Endothelial cell of umbilical vein (primary cell): ENCODE measurements at regions of chr14 and their contacts with region 1.

Region 1: DNA sequence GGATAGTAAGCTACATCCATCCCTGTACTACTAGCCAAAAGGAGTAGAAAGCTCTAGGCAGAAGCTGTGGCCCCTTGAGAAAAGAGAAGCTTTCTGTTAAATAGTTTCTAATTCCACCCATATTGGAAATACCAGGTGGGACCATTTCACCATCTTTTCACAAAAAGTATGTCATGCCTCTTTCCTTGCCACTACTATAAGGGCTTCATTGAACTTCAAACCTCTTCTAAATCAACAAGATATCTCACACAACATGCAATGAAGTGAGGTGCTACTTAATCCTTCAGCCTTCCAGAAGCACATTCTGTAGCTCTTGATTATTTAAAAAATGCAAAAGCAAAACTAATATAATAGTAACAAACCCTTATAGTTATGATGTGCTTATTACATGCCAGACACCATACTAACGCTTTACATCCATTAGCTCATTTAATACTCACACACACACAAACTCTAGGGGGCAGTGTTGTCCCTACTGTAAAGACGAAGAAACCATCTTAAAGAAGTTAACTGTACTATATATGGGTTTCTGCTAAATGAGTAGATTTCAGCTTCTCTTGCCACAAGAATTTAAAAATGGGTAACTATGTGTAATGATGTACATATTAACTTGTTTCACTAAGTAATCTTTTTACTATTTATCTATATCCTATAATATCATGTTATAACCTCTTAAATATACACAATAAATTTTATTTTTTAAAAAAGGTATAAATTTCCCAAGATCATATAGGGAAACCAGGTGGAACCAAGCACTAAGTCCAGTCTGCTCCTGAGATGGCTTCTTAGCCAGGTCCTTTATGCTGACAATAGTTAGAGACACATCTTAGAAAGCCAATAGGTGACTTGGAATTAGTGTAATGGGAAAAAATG is 124.4 kb downstream of the RPS29 start:
- DNase-seq: peak; percentile 78
- H3K4me3 ChIP-seq: no peak overlapping the region
- H3K27ac ChIP-seq: no peak overlapping the region
- H3K4me1 ChIP-seq: no peaks in the 10 kb centered on the region
- H3K27me3 ChIP-seq: peaks cover 5 to 15% of the 10 kb centered on the region in 2 experiments
- CTCF ChIP-seq: peak; percentile 48 to 51
- POLR2A ChIP-seq: no peak

Region 2: GRCh38 chr14:49396801-49397200 is 65.0 kb before region 1 on chr14:
- CTCF ChIA-PET with region 1: no interaction called
- POLR2A ChIA-PET with region 1: no interaction called
- dilution Hi-C with region 1: no loop called
- intact Hi-C with region 1: no loop called
- DNase-seq: no peak
- H3K4me3 ChIP-seq: no peak overlapping the region
- H3K27ac ChIP-seq: no peak overlapping the region
- H3K4me1 ChIP-seq: no peaks in the 10 kb centered on the region
- H3K27me3 ChIP-seq: no peaks in the 10 kb centered on the region
- CTCF ChIP-seq: no peak
- POLR2A ChIP-seq: no peak

Region 3: DNA sequence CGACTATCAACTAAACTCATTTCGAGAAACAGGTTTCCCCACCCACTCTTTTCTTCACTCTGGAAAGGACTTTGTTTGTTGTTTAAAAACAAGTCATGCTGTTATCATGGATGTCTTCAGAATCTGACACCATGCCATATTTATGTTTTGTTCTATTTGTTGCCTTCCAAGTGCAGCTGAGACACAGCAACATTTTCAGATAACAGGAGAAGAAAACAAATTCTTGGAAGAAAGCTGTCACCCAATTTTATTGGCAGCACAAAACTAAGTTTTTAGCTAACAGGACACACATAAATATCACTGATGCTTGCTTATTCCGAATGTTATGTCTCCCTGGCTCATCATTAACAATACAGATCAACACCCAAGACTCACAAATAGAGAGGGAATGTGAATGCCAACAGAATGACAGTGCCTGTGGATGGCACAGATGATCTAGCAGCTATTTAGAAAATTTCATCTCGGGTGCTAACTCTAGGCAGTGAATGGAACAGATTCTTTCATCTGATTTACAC is 23.5 kb before region 1 on chr14:
- CTCF ChIA-PET with region 1: interaction called, 10 read pairs
- POLR2A ChIA-PET with region 1: no interaction called
- dilution Hi-C with region 1: no loop called
- intact Hi-C with region 1: no loop called
- DNase-seq: no peak
- H3K4me3 ChIP-seq: no peak overlapping the region
- H3K27ac ChIP-seq: no peak overlapping the region
- H3K4me1 ChIP-seq: no peaks in the 10 kb centered on the region
- H3K27me3 ChIP-seq: peaks cover 0 to 1% of the 10 kb centered on the region in 2 experiments
- CTCF ChIP-seq: no peak
- POLR2A ChIP-seq: no peak

Region 4: DNA sequence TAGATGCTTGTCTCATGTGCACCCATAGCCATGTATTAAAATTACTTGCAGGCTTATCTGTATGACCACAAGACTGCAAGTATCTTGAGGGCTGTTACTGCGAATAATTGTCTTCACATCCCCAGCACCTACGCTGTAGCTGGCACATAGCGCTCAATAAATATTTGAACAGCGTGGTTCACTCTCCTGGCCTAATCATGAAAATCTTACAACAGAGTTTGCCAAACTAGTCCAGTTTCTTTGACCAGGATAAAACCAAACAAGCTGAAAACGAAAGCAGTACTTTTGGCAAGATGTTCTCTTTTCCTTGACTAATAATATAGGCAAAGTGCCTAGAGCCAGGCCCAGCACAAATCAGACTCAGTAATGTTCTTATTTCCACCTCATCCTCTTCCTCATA is 17.7 kb after region 1 on chr14:
- CTCF ChIA-PET with region 1: interaction called, 23 read pairs
- POLR2A ChIA-PET with region 1: no interaction called
- dilution Hi-C with region 1: no loop called
- intact Hi-C with region 1: no loop called
- DNase-seq: no peak
- H3K4me3 ChIP-seq: no peak overlapping the region
- H3K27ac ChIP-seq: no peak overlapping the region
- H3K4me1 ChIP-seq: no peaks in the 10 kb centered on the region
- H3K27me3 ChIP-seq: peaks cover 2% of the 10 kb centered on the region in 2 experiments
- CTCF ChIP-seq: no peak
- POLR2A ChIP-seq: no peak

Region 5: DNA sequence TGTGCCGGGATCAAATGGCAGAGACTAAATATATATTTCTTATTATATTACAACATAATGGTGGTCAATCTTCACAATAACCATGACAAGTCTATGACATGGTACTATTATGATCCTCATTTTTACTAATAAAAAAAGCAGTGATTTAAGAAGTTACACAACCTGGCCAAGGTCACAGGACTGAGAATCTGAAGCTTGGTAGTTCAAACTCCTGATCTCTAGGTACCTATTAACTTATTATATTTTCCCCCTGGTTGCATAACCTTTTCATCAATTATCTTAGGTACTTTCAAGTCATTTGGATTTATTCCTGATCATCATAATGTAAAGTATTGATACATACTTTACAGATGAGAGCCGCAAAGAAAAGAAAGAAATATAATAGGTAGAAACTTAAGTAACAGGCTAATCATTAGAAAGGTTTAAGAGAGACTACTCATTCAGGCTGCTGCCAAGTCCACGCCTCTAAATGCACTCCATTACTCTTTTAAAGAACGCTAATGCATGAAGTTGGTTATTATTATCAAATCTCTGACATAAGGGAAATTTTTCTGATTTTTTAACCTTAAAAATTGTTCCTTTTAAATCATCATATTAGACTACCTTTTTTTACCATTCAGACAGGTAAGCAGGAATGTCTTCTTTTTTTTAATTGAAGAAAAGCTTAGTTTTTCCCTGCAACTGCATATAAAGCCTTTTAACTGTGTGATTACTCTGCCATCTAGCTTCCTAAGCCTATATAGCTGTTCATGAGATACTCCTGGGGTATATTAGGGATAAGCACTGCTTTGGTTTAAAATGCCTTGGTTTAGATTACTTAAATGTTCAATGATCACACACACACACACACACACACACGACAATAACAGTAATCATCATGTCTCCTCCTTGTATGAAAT is 88.8 kb after region 1 on chr14:
- CTCF ChIA-PET with region 1: interaction called, 119 read pairs
- POLR2A ChIA-PET with region 1: no interaction called
- dilution Hi-C with region 1: no loop called
- intact Hi-C with region 1: loop called (anchors 1 kb)
- DNase-seq: peak; percentile 31
- H3K4me3 ChIP-seq: no peak overlapping the region
- H3K27ac ChIP-seq: no peak overlapping the region
- H3K4me1 ChIP-seq: no peaks in the 10 kb centered on the region
- H3K27me3 ChIP-seq: peaks cover 0 to 2% of the 10 kb centered on the region in 2 experiments
- CTCF ChIP-seq: peak in 1 of 2 donors; percentile 8
- POLR2A ChIP-seq: no peak

Region 6: DNA sequence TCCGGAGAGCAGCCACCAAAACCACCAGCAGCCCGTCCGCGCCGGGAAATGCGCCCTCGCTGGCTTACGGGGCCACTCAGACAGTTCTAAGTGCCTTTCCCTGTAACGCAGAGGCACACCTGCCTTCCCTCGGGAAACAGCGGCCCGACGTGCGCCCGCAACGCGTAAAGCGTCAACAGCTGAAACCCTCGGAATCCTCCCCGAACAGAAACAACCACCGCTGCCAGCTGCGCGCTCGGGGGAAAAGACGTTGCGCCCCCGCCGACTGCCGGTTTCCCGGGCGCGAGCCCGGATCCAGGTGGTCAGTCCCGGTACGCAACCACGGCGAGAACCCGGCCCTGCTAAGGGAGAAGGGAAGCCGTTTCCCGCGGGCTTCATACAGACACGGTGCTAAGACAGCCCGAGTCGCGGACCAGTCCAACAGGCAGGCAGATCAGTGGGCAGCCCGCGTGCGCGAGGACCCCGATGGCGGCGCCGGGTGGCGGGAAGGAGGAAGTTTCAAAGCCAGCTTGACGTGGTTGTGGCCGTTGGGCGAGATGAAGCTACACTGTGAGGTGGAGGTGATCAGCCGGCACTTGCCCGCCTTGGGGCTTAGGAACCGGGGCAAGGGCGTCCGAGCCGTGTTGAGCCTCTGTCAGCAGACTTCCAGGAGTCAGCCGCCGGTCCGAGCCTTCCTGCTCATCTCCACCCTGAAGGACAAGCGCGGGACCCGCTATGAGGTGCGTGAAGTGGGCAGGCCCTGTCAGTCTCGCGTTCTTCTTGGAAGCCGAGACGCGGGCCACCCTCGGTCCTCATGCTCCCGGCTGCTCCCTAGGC is 136.9 kb after region 1 on chr14 and contains the start of gene LRR1:
- CTCF ChIA-PET with region 1: interaction called, 19 read pairs
- POLR2A ChIA-PET with region 1: no interaction called
- dilution Hi-C with region 1: no loop called
- intact Hi-C with region 1: loop called (anchors 1 kb)
- DNase-seq: peak; percentile 90
- H3K4me3 ChIP-seq: peak within 1 kb of the TSS; percentile 57 to 100 (median 97)
- H3K27ac ChIP-seq: peak within 1 kb of the TSS; percentile 91
- H3K4me1 ChIP-seq: peaks cover 3% of the 10 kb centered on the region
- H3K27me3 ChIP-seq: no peaks in the 10 kb centered on the region
- CTCF ChIP-seq: no peak
- POLR2A ChIP-seq: peak; percentile 83
- total RNA-seq, gene LRR1: 30.1 and 30.9 TPM in 2 replicates

Region 7: GRCh38 chr14:49633640-49634546 is 172.1 kb after region 1 on chr14:
- CTCF ChIA-PET with region 1: interaction called, 12 read pairs
- POLR2A ChIA-PET with region 1: no interaction called
- dilution Hi-C with region 1: no loop called
- intact Hi-C with region 1: loop called (anchors 5 kb)
- DNase-seq: peak; percentile 96
- H3K4me3 ChIP-seq: peak overlapping the region; percentile 79 to 98 (median 96)
- H3K27ac ChIP-seq: peak overlapping the region; percentile 90
- H3K4me1 ChIP-seq: peaks cover 16% of the 10 kb centered on the region
- H3K27me3 ChIP-seq: no peaks in the 10 kb centered on the region
- CTCF ChIP-seq: peak; percentile 81 to 91
- POLR2A ChIP-seq: peak; percentile 55

Region 8: DNA sequence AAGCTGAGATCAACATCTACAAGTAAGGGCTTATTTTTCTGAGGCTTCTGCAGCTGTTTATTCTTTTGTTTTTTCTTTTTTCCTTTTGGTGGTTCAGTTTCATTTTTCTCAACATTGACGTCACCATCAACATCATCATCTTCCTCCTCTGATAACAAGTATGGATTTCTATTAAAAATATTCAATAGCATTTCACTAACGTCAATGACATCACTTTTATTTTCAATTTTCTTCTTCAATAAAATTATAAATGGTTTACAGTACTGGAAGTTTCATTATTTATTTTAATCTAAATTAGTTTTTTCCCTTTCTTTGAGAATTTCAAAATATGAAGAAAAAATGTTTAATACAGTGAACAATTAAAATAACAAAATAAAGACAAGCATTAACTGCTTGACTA is 366.9 kb after region 1 on chr14:
- CTCF ChIA-PET with region 1: interaction called, 18 read pairs
- POLR2A ChIA-PET with region 1: no interaction called
- dilution Hi-C with region 1: no loop called
- intact Hi-C with region 1: no loop called
- DNase-seq: no peak
- H3K4me3 ChIP-seq: no peak overlapping the region
- H3K27ac ChIP-seq: no peak overlapping the region
- H3K4me1 ChIP-seq: no peaks in the 10 kb centered on the region
- H3K27me3 ChIP-seq: no peaks in the 10 kb centered on the region
- CTCF ChIP-seq: no peak
- POLR2A ChIP-seq: no peak